Mammary epithelial cell (primary cell): ENCODE measurements at regions of chr3 and their contacts with region 1.

Region 1: DNA sequence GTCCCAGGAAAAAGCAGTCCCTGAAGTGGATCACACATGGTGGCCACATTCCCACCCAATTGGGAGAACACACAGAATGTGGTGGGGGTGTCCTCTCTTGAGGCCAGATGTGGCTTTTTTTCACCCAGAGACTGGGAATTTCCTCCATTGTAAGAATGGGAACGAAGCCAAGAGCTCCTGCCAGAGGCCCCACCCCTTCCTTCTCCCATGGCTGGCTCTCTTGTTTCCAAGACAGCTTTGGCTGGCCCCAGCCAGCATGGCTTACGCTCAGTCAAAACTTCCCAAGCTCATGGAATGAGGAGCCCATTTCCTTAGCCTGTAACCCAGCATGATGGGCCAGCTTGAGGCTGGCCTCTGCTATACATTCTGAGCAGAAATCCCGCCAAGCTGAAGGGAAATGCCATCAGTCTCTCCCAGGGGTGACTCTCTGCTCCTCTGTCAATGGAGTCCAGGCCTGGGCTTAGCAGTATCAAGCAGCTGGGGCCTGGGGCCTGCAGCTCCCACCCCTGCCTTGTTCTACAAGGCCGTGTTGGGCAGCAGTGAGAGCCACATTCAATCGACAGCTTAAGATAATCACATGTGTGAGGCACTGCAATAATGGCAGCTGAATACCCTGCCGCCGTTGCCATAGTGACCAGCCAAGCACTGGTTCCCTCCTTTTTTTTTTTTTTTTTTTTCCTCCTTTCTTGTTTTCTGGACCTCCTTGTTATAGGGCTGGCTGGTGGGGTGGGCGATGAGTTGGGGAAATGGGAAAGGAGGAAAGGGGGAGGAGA is 142.4 kb downstream of the EPHB1 start:
- DNase-seq: no peak
- H3K4me3 ChIP-seq: no peak overlapping the region
- H3K27ac ChIP-seq: no peak overlapping the region
- H3K4me1 ChIP-seq: no peaks in the 10 kb centered on the region
- H3K27me3 ChIP-seq: no peaks in the 10 kb centered on the region
- CTCF ChIP-seq: no peak

Region 2: DNA sequence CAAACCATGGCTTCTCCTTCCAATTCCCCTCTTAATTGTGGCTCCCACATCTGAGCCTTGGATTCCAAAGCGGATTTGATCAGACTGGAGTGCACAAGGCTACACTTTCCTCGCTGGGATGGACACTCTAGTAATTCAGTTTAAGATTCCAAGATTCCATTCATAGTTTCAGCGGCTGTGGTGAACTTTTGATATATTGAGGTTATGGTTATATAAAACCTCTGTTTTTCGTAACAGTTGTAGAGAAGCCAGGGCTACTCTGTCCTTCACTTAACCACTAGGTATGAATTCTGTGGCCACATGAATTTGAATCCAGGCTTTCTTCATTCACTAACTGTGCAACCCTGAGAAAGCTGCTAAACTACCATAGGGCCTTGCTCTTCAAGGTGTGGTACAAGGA is 218.7 kb before region 1 on chr3:
- CTCF ChIA-PET with region 1: no interaction called
- dilution Hi-C with region 1: no loop called
- in situ Hi-C with region 1: no loop called
- intact Hi-C with region 1: no loop called
- DNase-seq: no peak
- H3K4me3 ChIP-seq: no peak overlapping the region
- H3K27ac ChIP-seq: no peak overlapping the region
- H3K4me1 ChIP-seq: no peaks in the 10 kb centered on the region
- H3K27me3 ChIP-seq: peaks cover 2% of the 10 kb centered on the region
- CTCF ChIP-seq: no peak

Region 3: GRCh38 chr3:134904241-134904771 is 33.1 kb before region 1 on chr3:
- CTCF ChIA-PET with region 1: no interaction called
- dilution Hi-C with region 1: loop called (anchors 5 kb)
- in situ Hi-C with region 1: no loop called
- intact Hi-C with region 1: no loop called
- DNase-seq: no peak
- H3K4me3 ChIP-seq: no peak overlapping the region
- H3K27ac ChIP-seq: no peak overlapping the region
- H3K4me1 ChIP-seq: no peaks in the 10 kb centered on the region
- H3K27me3 ChIP-seq: no peaks in the 10 kb centered on the region
- CTCF ChIP-seq: no peak

Region 4: GRCh38 chr3:135018149-135018923 is 80.9 kb after region 1 on chr3:
- CTCF ChIA-PET with region 1: no interaction called
- dilution Hi-C with region 1: loop called (anchors 5 kb)
- in situ Hi-C with region 1: no loop called
- intact Hi-C with region 1: no loop called
- DNase-seq: no peak
- H3K4me3 ChIP-seq: no peak overlapping the region
- H3K27ac ChIP-seq: no peak overlapping the region
- H3K4me1 ChIP-seq: no peaks in the 10 kb centered on the region
- H3K27me3 ChIP-seq: no peaks in the 10 kb centered on the region
- CTCF ChIP-seq: no peak

Region 5: GRCh38 chr3:135597855-135598254 is 660.4 kb after region 1 on chr3:
- CTCF ChIA-PET with region 1: no interaction called
- dilution Hi-C with region 1: no loop called
- in situ Hi-C with region 1: no loop called
- intact Hi-C with region 1: no loop called
- DNase-seq: no peak
- H3K4me3 ChIP-seq: no peak overlapping the region
- H3K27ac ChIP-seq: no peak overlapping the region
- H3K4me1 ChIP-seq: no peaks in the 10 kb centered on the region
- H3K27me3 ChIP-seq: no peaks in the 10 kb centered on the region
- CTCF ChIP-seq: no peak